ENCODE measurements at regions of chr9 and their contacts with region 1.

Region 1: GRCh38 chr9:31799953-31800609 is 584.4 kb upstream of the ACO1 start:
- DNase-seq: peak; percentile 41
- H3K4me3 ChIP-seq: no peak overlapping the region
- H3K27ac ChIP-seq: no peak overlapping the region
- H3K4me1 ChIP-seq: no peaks in the 10 kb centered on the region
- H3K27me3 ChIP-seq: no peaks in the 10 kb centered on the region
- CTCF ChIP-seq: peak; percentile 73 to 78

Region 2: DNA sequence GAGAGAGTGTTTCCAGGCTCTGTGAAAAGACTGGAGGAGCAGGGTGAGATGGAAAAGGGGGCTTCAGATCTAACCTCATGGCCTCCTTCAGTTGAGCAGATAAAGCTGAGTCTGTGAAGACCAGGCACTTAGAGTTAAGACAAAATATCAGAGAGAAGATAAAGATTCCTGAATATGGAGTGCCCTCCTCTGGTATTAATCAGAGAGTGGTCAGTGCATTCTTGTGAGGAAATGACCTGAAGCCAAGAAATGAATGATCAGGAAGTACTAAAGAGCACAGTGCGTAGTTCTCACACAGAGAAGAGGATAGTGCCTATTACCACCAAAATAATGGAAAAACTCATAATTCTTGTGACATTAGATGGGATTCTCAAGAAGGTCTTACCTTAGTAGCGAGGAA is 832.6 kb before region 1 on chr9:
- CTCF ChIA-PET with region 1: no interaction called
- dilution Hi-C with region 1: no loop called
- in situ Hi-C with region 1: no loop called
- intact Hi-C with region 1: loop called (anchors 5 kb)
- DNase-seq: peak; percentile 6
- H3K4me3 ChIP-seq: no peak overlapping the region
- H3K27ac ChIP-seq: no peak overlapping the region
- H3K4me1 ChIP-seq: no peaks in the 10 kb centered on the region
- H3K27me3 ChIP-seq: no peaks in the 10 kb centered on the region
- CTCF ChIP-seq: peak; percentile 17 to 37

Region 3: DNA sequence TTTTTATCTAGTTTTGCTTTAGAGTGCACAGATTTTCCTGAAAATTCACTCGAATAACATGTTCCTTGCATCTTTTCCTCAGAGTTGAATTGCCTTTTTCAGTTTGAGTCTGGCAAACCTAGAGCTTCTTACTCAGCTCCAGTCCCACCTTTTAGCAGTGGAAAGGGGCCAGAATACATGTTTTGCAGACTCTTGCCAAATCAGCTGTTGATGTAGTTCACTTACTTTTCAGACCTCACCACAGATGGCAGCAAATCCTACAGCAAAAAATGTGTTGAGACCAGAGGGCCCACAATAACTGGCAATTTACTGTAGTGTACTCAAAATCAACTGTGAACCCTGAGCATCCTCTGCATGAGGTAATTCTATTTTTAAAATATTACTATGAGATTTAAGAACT is 39.2 kb after region 1 on chr9:
- CTCF ChIA-PET with region 1: no interaction called
- dilution Hi-C with region 1: no loop called
- in situ Hi-C with region 1: no loop called
- intact Hi-C with region 1: no loop called
- DNase-seq: no peak
- H3K4me3 ChIP-seq: no peak overlapping the region
- H3K27ac ChIP-seq: no peak overlapping the region
- H3K4me1 ChIP-seq: no peaks in the 10 kb centered on the region
- H3K27me3 ChIP-seq: peaks cover 4% of the 10 kb centered on the region
- CTCF ChIP-seq: peak in 1 of 2 donors; percentile 41

Region 4: GRCh38 chr9:31854187-31854586 is 54.1 kb after region 1 on chr9:
- CTCF ChIA-PET with region 1: no interaction called
- dilution Hi-C with region 1: no loop called
- in situ Hi-C with region 1: no loop called
- intact Hi-C with region 1: no loop called
- DNase-seq: no peak
- H3K4me3 ChIP-seq: no peak overlapping the region
- H3K27ac ChIP-seq: no peak overlapping the region
- H3K4me1 ChIP-seq: no peaks in the 10 kb centered on the region
- H3K27me3 ChIP-seq: no peaks in the 10 kb centered on the region
- CTCF ChIP-seq: no peak